WTC11 (cell line): ENCODE measurements at regions of chr3 and their contacts with region 1.

Region 1: DNA sequence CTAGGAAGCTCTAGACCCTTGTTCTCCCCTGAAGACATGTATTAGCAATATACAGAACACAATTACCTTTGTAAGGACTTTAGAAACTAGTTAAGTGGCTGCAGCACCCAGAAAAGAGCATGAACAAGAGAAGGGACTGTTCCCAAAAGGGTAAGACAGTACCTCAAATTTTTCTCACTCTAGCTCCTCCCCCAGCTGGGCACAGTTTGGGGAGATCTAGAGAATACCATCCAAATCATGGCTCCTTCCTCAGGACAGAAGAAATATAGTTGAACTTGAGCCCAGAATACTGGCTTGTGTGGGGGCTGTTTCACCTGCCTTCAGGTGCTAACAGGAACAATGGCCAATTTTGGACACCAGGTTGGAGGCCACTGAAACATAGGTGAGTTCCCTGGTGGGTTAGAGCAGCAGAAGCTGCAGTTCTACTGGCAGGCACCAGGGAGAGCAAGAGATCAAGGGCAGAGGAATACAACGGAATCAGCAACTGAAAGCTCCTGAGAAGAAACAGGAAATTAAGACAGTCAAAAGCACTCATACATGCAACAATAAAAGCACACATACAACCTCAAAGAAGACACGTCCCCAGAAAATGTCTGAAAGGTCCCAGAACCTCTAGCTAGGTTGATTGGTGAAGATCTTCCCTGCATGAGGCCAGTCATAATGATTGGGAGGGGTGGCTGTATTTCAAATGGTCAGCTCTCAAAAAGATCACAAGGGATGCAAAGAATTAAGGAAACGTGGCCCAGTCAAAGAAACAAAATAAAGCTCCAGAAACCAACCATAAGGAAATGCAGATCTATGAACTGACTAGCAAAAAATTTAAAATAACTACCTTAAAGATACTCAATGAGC is 104.9 kb upstream of the ASB14 start:
- DNase-seq: peak; percentile 62
- ATAC-seq: peak; percentile 99
- H3K4me3 Mint-ChIP-seq: no peak overlapping the region
- H3K27ac Mint-ChIP-seq: no peak overlapping the region
- H3K4me1 Mint-ChIP-seq: peaks cover 8% of the 10 kb centered on the region
- H3K27me3 Mint-ChIP-seq: no peaks in the 10 kb centered on the region
- CTCF ChIP-seq: peak; percentile 76

Region 2: DNA sequence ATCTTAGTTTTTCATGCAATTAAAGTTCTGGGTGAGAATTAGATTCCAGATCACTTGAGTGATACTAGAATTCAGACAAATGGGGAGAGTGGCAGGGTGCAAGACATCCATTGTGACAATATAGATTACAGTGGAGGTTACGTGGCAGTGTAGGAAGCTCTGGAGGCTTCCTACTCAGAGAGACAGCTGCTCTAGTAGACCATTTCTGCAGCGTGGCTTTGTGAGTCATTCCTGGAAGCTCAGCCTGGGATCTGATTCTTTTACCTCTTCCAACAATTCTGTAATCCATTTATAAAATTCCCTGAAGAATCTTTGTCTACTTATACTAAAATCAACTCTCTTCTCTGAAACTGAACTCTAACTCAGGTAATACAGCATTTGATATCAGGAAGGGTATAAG is 14.5 kb before region 1 on chr3:
- CTCF ChIA-PET with region 1: interaction called, 28 read pairs
- POLR2A ChIA-PET with region 1: no interaction called
- DNase-seq: no peak
- ATAC-seq: no peak
- H3K4me3 Mint-ChIP-seq: no peak overlapping the region
- H3K27ac Mint-ChIP-seq: no peak overlapping the region
- H3K4me1 Mint-ChIP-seq: peaks cover 12% of the 10 kb centered on the region
- H3K27me3 Mint-ChIP-seq: no peaks in the 10 kb centered on the region; the same call in 1 of the 2 replicates
- CTCF ChIP-seq: no peak

Region 3: DNA sequence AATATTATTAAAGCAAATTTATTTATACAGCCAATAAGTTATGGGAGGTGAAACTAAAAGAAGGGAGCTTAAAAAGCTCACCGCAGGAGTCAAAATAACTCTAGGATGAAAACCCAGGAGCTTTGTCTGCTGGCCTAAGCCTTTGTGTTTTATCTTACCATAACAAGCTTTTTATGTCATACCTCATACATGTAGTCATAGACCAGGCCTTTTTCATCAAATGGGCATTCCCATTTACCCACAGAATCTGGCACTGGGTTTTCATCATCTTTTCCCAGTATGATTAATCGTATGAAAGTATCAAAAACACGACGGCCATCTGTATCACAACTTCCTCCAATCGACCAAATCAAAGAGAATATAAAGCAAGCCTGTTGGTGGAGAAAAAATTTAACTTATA is 23.9 kb after region 1 on chr3:
- CTCF ChIA-PET with region 1: interaction called, 21 read pairs
- POLR2A ChIA-PET with region 1: no interaction called
- DNase-seq: no peak
- ATAC-seq: no peak
- H3K4me3 Mint-ChIP-seq: no peak overlapping the region
- H3K27ac Mint-ChIP-seq: no peak overlapping the region; the same call in 1 of the 2 replicates
- H3K4me1 Mint-ChIP-seq: peaks cover 6% of the 10 kb centered on the region
- H3K27me3 Mint-ChIP-seq: no peaks in the 10 kb centered on the region
- CTCF ChIP-seq: no peak

Region 4: GRCh38 chr3:57434041-57434440 is 36.6 kb after region 1 on chr3:
- CTCF ChIA-PET with region 1: interaction called, 32 read pairs
- POLR2A ChIA-PET with region 1: no interaction called
- DNase-seq: no peak
- ATAC-seq: peak; percentile 85
- H3K4me3 Mint-ChIP-seq: no peak overlapping the region
- H3K27ac Mint-ChIP-seq: no peak overlapping the region
- H3K4me1 Mint-ChIP-seq: no peaks in the 10 kb centered on the region
- H3K27me3 Mint-ChIP-seq: no peaks in the 10 kb centered on the region; the same call in 1 of the 2 replicates
- CTCF ChIP-seq: peak; percentile 27; the same call in 1 of the 2 replicates

Region 5: GRCh38 chr3:57555738-57556458 is 158.5 kb after region 1 on chr3 and contains the start of gene PDE12:
- CTCF ChIA-PET with region 1: interaction called, 13 read pairs
- POLR2A ChIA-PET with region 1: interaction called, 3 read pairs
- DNase-seq: peak; percentile 81
- ATAC-seq: peak; percentile 88
- H3K4me3 Mint-ChIP-seq: peak within 1 kb of the TSS; percentile 95
- H3K27ac Mint-ChIP-seq: peak within 1 kb of the TSS; percentile 100
- H3K4me1 Mint-ChIP-seq: peaks cover 18% of the 10 kb centered on the region
- H3K27me3 Mint-ChIP-seq: peaks cover 10% of the 10 kb centered on the region
- CTCF ChIP-seq: no peak
- total RNA-seq, gene PDE12: 16.2 to 16.9 TPM (median 16.4 TPM) in 3 replicates